SK-N-SH (cell line): ENCODE measurements at regions of chr1 and their contacts with region 1.

Region 1: GRCh38 chr1:202192770-202193613 is 607 bp upstream of the LGR6 start:
- DNase-seq: peak; percentile 89
- H3K4me3 ChIP-seq: no peak overlapping the region
- H3K27ac ChIP-seq: no peak overlapping the region
- H3K4me1 ChIP-seq: peaks cover 0 to 10% of the 10 kb centered on the region in 2 experiments; a peak in 1 of 4 replicates
- H3K27me3 ChIP-seq: peaks cover 28% of the 10 kb centered on the region
- CTCF ChIP-seq: peak; percentile 83
- EP300 ChIP-seq: no peak
- RAD21 ChIP-seq: peak; percentile 84

Region 2: GRCh38 chr1:201904579-201904978 is 288.4 kb before region 1 on chr1:
- CTCF ChIA-PET with region 1: no interaction called
- POLR2A ChIA-PET with region 1: no interaction called
- DNase-seq: no peak
- H3K4me3 ChIP-seq: no peak overlapping the region
- H3K27ac ChIP-seq: peak overlapping the region; percentile 71 to 88
- H3K4me1 ChIP-seq: peaks cover 5 to 33% of the 10 kb centered on the region in 2 experiments; a peak in 3 of 4 replicates
- H3K27me3 ChIP-seq: no peaks in the 10 kb centered on the region
- CTCF ChIP-seq: no peak
- EP300 ChIP-seq: peak in 1 of 2 experiments; percentile 76; a peak in 1 of 4 replicates
- RAD21 ChIP-seq: no peak

Region 3: DNA sequence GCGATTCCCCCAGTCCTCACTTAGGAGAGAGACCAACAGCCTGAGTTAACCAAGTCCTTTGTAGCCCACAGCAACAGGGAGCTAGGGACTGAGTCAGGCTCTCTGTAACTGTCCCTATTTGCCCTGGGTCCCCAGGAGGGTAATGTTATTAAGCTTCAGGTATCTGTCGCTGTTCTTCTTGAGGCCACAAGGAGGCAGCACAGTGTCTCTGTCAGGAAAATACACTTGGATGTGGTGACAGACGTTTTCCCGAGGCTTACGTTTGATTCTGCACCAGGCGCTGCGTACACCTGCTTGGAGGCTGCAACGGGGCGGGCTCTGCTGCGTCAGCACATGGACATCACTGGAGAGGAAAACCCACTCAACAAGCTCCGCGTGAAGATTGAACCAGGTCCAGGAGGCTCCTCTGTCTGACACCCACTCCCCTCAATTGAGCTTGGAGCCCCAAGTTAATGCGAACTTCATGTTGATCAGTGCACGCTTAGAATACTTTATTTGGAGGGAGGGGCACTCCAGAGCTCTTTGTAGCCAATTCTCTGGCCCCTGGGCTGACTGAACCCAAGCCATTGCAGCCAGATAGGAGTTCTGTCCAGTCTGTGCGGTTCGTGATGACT is 193.3 kb before region 1 on chr1:
- CTCF ChIA-PET with region 1: no interaction called
- POLR2A ChIA-PET with region 1: no interaction called
- DNase-seq: peak; percentile 76
- H3K4me3 ChIP-seq: no peak overlapping the region; a peak in 1 of 4 replicates
- H3K27ac ChIP-seq: no peak overlapping the region
- H3K4me1 ChIP-seq: no peaks in the 10 kb centered on the region
- H3K27me3 ChIP-seq: no peaks in the 10 kb centered on the region
- CTCF ChIP-seq: peak; percentile 72
- EP300 ChIP-seq: no peak
- RAD21 ChIP-seq: peak; percentile 64

Region 4: GRCh38 chr1:202076050-202076511 is 116.9 kb before region 1 on chr1:
- CTCF ChIA-PET with region 1: no interaction called
- POLR2A ChIA-PET with region 1: no interaction called
- DNase-seq: peak; percentile 73
- H3K4me3 ChIP-seq: no peak overlapping the region
- H3K27ac ChIP-seq: peak overlapping the region in 1 of 2 experiments; percentile 69; a peak in 2 of 4 replicates
- H3K4me1 ChIP-seq: peaks cover 0 to 22% of the 10 kb centered on the region in 2 experiments; a peak in 1 of 4 replicates
- H3K27me3 ChIP-seq: no peaks in the 10 kb centered on the region
- CTCF ChIP-seq: no peak
- EP300 ChIP-seq: peak in 1 of 2 experiments; percentile 86; a peak in 2 of 4 replicates
- RAD21 ChIP-seq: no peak; the same call in 1 of the 2 replicates

Region 5: GRCh38 chr1:202162047-202162417 is 31.0 kb before region 1 on chr1:
- CTCF ChIA-PET with region 1: interaction called, 14 read pairs
- POLR2A ChIA-PET with region 1: no interaction called
- DNase-seq: no peak
- H3K4me3 ChIP-seq: no peak overlapping the region
- H3K27ac ChIP-seq: no peak overlapping the region
- H3K4me1 ChIP-seq: peaks cover 0 to 39% of the 10 kb centered on the region in 2 experiments; a peak in 1 of 4 replicates
- H3K27me3 ChIP-seq: no peaks in the 10 kb centered on the region
- CTCF ChIP-seq: no peak
- EP300 ChIP-seq: no peak
- RAD21 ChIP-seq: no peak

Region 6: DNA sequence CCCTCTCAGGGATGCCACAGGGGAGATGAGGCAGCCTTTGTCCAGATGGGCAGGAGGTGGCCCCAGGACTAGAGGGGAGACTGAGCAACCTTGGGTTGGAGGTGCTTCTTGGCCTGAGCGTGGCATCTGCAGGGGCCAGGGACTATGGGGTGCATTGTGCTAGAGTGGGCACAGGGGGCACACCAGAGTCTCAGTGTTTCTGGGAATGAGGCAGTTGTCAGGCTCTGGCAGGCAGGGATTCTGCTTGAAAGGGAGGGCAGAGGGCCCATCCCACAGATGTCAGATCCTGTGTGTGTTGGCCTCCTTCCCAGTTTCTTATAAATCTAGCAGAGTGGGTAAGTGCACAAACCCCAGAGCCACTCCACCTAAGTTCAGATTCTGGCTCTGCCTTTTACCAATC is 14.3 kb after region 1 on chr1:
- CTCF ChIA-PET with region 1: interaction called, 18 read pairs
- POLR2A ChIA-PET with region 1: no interaction called
- DNase-seq: peak; percentile 89
- H3K4me3 ChIP-seq: no peak overlapping the region
- H3K27ac ChIP-seq: no peak overlapping the region
- H3K4me1 ChIP-seq: peaks cover 0 to 2% of the 10 kb centered on the region in 2 experiments; a peak in 1 of 4 replicates
- H3K27me3 ChIP-seq: peaks cover 6% of the 10 kb centered on the region; the same call in 1 of the 2 replicates
- CTCF ChIP-seq: peak; percentile 55
- EP300 ChIP-seq: no peak
- RAD21 ChIP-seq: peak; percentile 48

Region 7: DNA sequence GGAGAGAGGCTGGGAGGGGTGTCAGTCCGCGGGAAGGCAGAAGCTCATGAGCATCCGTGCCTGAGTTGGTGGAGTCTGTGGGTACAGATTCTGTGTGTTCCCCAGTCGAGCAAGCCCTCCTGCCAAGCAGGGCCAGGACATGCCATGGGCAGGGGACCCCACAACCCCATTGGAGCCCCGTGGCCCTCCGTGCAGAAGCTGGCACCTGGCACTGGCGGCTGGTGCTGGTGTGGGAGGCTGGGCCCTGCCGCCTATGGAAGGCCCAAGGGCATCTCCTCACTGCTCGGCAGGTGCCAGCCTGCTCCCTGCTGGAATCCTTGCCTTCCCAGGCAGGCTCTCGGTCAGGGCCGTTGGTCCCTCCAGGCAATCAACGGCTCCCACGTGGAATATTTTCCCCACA is 75.0 kb after region 1 on chr1:
- CTCF ChIA-PET with region 1: interaction called, 11 read pairs
- POLR2A ChIA-PET with region 1: no interaction called
- DNase-seq: no peak
- H3K4me3 ChIP-seq: no peak overlapping the region
- H3K27ac ChIP-seq: no peak overlapping the region
- H3K4me1 ChIP-seq: peaks cover 0 to 9% of the 10 kb centered on the region in 2 experiments; a peak in 1 of 4 replicates
- H3K27me3 ChIP-seq: peaks cover 54% of the 10 kb centered on the region
- CTCF ChIP-seq: no peak
- EP300 ChIP-seq: no peak
- RAD21 ChIP-seq: no peak

Region 8: GRCh38 chr1:202304375-202304774 is 111.4 kb after region 1 on chr1:
- CTCF ChIA-PET with region 1: interaction called, 73 read pairs
- POLR2A ChIA-PET with region 1: no interaction called
- DNase-seq: peak; percentile 84
- H3K4me3 ChIP-seq: no peak overlapping the region
- H3K27ac ChIP-seq: peak overlapping the region in 1 of 2 experiments; percentile 58; a peak in 1 of 4 replicates
- H3K4me1 ChIP-seq: peaks cover 0 to 37% of the 10 kb centered on the region in 2 experiments; a peak in 1 of 4 replicates
- H3K27me3 ChIP-seq: no peaks in the 10 kb centered on the region
- CTCF ChIP-seq: no peak
- EP300 ChIP-seq: peak in 1 of 2 experiments; percentile 13; a peak in 1 of 4 replicates
- RAD21 ChIP-seq: no peak